HepG2 (cell line): ENCODE measurements at regions of chr14 and their contacts with region 1.

Region 1: DNA sequence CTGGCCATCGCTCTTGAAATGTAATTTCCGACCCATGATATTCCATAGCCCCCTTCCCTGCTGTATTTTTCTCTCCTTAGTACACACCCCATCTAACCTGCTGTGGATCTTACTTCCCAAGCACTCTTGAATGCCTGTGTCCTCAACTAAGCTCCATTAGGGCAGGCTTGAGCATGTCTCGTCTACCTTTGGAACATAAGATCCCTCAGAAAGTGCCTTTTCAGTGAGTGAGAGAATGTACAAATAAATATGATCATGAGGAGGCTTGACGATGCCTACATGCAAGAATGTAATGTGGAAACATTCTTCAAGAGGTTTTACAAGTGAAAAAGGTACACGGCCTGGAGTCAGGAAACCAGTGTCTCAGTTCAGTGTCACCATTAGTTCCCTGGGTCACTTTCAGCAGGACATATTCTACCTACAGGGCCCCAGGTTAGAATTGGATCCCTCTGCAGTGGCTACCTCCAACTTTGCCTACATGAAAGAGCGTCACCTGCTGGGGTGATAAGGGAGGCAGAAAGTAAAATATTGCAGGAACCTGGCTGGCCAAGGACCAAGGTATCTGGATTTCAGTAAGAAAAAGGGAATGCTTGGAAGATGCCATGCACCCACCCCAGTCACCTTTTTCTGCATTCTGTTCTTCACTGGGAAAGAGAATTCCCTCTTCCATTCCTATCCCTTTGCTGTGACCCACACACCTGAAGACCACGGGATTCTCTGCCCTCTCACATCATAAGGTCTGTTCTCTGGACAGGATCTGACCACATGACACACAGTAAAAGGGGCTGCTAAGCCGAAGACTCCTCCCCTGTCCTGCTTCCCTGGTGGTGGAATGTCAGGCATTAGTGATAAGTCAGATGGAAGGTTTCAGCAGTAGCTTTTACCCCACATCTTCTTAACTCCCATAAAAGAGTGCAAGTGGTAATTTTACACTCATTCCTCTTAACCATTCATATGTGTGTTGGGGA is 24.6 kb upstream of the SERPINA1 start:
- DNase-seq: peak; percentile 70
- ATAC-seq: peak; percentile 90
- H3K4me3 ChIP-seq: peak overlapping the region in 1 of 3 experiments; percentile 9; a peak in 1 of 6 replicates
- H3K27ac ChIP-seq: peak overlapping the region; percentile 48
- H3K4me1 ChIP-seq: peaks cover 77% of the 10 kb centered on the region
- H3K27me3 ChIP-seq: no peaks in the 10 kb centered on the region
- CTCF ChIP-seq: peak; percentile 94
- EP300 ChIP-seq: no peak
- POLR2A ChIP-seq: no peak
- RAD21 ChIP-seq: peak; percentile 92

Region 2: GRCh38 chr14:94355191-94355797 is 57.7 kb before region 1 on chr14:
- CTCF ChIA-PET with region 1: interaction called, 14 read pairs
- POLR2A ChIA-PET with region 1: interaction called, 6 read pairs
- in situ Hi-C with region 1: no loop called
- intact Hi-C with region 1: loop called (anchors 1 kb)
- DNase-seq: peak; percentile 85
- ATAC-seq: peak; percentile 95
- H3K4me3 ChIP-seq: peak overlapping the region; percentile 40 to 65 (median 44); a peak in 5 of 6 replicates
- H3K27ac ChIP-seq: peak overlapping the region; percentile 63
- H3K4me1 ChIP-seq: peaks cover 61% of the 10 kb centered on the region
- H3K27me3 ChIP-seq: no peaks in the 10 kb centered on the region
- CTCF ChIP-seq: peak; percentile 88
- EP300 ChIP-seq: peak in 1 of 2 experiments; percentile 54; a peak in 2 of 4 replicates
- POLR2A ChIP-seq: peak in 1 of 2 experiments; percentile 34; a peak in 1 of 4 replicates
- RAD21 ChIP-seq: peak; percentile 80

Region 3: GRCh38 chr14:94439453-94440057 is 26.6 kb after region 1 on chr14:
- CTCF ChIA-PET with region 1: no interaction called
- POLR2A ChIA-PET with region 1: no interaction called
- in situ Hi-C with region 1: no loop called
- intact Hi-C with region 1: no loop called
- DNase-seq: no peak
- ATAC-seq: peak; percentile 66
- H3K4me3 ChIP-seq: no peak overlapping the region
- H3K27ac ChIP-seq: no peak overlapping the region
- H3K4me1 ChIP-seq: peaks cover 19% of the 10 kb centered on the region
- H3K27me3 ChIP-seq: no peaks in the 10 kb centered on the region
- CTCF ChIP-seq: no peak
- EP300 ChIP-seq: no peak
- POLR2A ChIP-seq: peak in 1 of 2 experiments; percentile 35; a peak in 1 of 4 replicates
- RAD21 ChIP-seq: no peak